ENCODE measurements at regions of chr3 and their contacts with region 1.

Region 1: DNA sequence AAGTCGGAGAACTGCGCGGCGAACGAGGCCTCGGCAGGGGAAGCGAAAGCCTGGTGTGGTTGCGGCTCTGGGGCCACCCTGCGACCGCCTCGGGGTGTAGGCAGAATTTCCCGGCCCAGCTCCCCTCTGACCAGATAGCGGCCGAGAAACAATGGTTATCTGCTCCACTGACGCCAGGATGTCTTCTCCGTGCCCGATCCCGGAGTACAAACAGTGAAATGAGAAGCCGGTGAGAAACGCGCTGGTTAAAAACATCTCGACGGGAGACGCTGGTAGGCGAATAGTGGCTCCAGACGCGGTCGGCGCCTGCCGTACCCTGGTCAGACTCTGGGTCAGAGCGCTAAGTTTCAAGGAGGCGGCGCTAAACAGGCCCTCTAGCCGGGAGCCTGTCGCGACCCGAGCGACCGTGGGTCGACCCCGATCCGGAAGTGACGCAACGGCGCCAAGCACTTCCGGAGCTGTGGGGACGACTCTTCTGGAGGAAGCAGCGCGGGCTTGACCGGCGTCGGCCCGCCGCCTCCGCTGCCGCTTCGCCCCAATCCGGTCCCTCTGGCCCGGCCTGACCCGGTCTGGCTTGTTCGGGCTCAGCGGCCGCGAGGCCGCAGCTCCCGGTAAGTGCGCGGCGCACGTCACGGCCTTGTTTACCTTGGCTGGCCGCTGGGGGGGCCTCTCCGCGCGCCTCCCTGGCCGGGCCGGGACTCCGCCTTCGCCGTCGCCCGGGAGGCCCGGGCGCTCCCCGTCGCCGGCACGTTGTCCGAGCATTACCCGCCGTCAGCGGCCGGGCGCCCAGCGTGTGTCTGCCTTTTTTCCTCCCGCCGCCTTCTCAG is at the start of gene ARIH2:
- DNase-seq: peak; percentile 89 to 96 (median 92)
- H3K4me3 ChIP-seq: peak within 1 kb of the TSS; percentile 100
- H3K27ac ChIP-seq: peak within 1 kb of the TSS; percentile 93
- H3K4me1 ChIP-seq: peaks cover 11% of the 10 kb centered on the region
- H3K27me3 ChIP-seq: no peaks in the 10 kb centered on the region
- CTCF ChIP-seq: peak in 2 of 3 donors; percentile 19 to 51
- EP300 ChIP-seq: no peak
- POLR2A ChIP-seq: peak; percentile 87
- total RNA-seq, gene ARIH2: 66.8 to 95.7 (median 72.0) TPM

Region 2: DNA sequence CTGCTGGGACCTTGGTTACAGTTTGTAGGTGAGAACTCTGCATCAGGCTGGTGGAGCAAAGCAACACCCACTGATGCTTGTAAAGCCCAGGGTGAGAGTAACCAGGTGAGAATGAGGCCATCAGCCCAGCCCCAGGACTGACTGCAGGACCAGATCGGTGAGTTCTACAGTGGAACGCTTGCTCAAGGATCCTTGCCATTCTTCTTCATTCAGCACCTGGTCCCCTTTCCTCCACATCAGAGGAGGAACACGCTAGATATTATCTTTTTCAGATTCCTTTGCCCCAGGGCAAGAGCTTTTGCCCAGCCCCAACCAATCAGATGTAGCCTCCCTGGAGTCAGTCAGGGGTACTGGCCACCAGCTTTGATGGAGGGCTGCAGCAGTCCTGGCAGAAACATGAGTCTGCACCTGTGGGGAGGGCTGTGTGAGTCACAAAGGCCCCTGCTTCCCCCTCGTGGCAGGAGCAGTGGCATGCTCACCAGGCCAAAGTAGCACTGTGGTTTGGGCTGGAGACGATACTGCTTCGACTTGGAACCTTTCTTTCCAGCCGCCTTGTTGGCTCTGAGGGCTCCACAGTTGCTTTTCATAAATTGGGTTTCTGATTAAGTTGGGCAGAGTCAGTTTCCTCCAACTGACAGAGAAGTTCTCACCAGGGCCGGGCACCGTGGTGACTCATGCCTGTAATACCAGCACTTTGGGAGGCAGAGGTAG is 411.1 kb before region 1 on chr3:
- intact Hi-C with region 1: no loop called
- DNase-seq: no peak
- H3K4me3 ChIP-seq: no peak overlapping the region
- H3K27ac ChIP-seq: no peak overlapping the region
- H3K4me1 ChIP-seq: peaks cover 13% of the 10 kb centered on the region
- H3K27me3 ChIP-seq: no peaks in the 10 kb centered on the region
- CTCF ChIP-seq: no peak
- EP300 ChIP-seq: no peak
- POLR2A ChIP-seq: no peak

Region 3: DNA sequence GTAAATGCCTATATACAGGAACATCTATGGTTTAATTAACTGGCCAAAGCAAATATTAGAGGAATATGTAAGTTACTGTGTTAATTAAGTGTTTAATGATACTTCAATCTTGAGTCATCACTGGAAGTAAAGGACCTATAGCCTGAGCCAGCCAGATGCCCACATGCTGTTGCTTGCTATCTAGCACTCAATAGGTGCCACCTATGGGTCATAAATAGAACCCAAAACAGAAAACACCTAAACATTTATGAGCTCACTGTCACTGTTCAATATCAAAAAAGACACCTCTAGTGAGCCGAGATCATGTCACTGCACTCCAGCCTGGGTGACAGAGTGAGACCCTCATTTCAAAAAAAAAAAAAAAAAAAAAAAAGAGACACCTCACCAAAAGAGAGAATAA is 153.2 kb before region 1 on chr3:
- intact Hi-C with region 1: no loop called
- DNase-seq: no peak
- H3K4me3 ChIP-seq: no peak overlapping the region
- H3K27ac ChIP-seq: no peak overlapping the region
- H3K4me1 ChIP-seq: no peaks in the 10 kb centered on the region
- H3K27me3 ChIP-seq: no peaks in the 10 kb centered on the region
- CTCF ChIP-seq: no peak
- EP300 ChIP-seq: no peak
- POLR2A ChIP-seq: no peak

Region 4: DNA sequence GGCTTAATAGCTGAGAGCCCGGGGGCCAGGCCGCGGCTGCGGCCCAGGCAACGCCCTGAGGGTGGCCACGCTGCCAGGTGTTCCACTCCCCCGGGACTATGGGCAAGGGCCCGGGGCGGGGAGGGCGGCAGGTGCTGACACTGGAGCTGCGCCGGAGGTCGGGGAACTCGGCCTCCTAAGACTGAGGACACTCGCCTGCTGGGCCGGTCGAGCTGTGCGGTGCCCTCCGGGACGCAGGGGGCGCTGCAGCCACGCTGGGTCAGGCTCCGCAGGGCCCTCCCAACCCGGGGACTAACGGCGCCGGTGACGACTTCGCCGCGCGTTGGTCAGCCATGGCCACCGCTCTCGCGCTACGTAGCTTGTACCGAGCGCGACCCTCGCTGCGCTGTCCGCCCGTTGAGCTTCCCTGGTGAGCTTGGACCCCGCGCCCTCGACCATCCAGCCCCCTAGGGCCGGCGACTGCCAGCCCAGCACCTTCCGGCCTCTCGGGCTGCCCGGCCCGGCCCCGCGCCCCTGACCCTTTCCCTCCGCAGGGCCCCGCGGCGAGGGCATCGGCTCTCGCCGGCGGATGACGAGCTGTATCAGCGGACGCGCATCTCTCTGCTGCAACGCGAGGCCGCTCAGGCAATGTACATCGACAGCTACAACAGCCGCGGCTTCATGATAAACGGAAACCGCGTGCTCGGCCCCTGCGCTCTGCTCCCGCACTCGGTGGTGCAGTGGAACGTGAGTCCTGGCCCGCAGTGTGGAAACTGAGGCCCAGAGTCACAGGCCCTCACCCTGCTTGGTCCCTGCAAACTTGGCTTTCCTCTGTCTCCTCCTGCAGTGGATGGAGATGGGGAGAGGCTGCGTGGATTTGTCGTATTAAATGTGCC is 103.4 kb after region 1 on chr3 and contains the start of gene NDUFAF3:
- intact Hi-C with region 1: loop called in 1 of 4 experiments (anchors 10 kb)
- DNase-seq: peak; percentile 90 to 95 (median 93)
- H3K4me3 ChIP-seq: peak within 1 kb of the TSS; percentile 94
- H3K27ac ChIP-seq: peak within 1 kb of the TSS; percentile 97 to 98
- H3K4me1 ChIP-seq: peaks cover 12% of the 10 kb centered on the region
- H3K27me3 ChIP-seq: no peaks in the 10 kb centered on the region
- CTCF ChIP-seq: peak; percentile 99
- EP300 ChIP-seq: no peak
- POLR2A ChIP-seq: peak; percentile 95
- total RNA-seq, gene NDUFAF3: 77.4 to 132 (median 96.3) TPM

Measured in ovary (tissue), 10 donors.